Activated CD4-positive, alpha-beta T cell treated with anti-CD3 and anti-CD28 coated beads for 36 hours (primary cell): ENCODE measurements at regions of chr17 and their contacts with region 1.

Region 1: DNA sequence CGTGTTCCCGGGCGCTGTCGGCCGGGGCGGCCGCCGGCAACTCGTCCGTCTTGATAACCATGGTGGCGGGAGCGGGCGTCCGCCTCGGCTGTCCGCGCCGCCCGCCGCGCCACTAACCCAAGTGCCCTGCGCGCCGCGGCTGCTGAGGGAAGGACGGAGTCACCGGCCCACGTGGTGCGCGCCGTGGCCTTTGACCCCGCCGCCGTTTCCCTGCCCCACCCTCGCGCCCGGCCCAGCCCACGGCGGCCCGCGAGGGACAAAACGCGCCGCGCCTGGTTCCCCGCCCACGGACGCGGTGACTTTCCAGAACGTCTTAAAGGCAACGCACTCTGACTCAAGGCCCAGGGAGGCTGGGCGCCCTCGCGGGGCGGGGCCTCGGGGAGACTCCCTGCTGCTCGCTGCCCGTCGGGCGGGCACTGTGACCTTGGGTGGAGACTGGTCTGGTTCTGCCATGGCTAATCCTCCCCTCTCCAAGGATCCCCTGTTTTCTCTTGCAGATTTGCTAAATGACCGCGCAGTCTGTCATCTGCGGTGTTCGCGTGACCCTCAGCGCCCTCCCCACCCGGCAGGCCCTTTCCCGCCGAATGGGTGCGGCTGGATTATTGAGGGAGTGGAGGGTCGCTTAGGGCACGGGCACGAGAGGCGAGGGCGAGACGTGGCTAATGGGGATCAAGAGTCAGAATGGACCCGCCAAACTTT is at the start of gene CLUH:
- DNase-seq: peak; percentile 98
- ATAC-seq: peak; percentile 95
- H3K4me3 Mint-ChIP-seq: peak within 1 kb of the TSS; percentile 86
- H3K27ac Mint-ChIP-seq: peak within 1 kb of the TSS; percentile 84
- H3K4me1 Mint-ChIP-seq: peaks cover 35% of the 10 kb centered on the region
- H3K27me3 Mint-ChIP-seq: no peaks in the 10 kb centered on the region
- total RNA-seq, gene CLUH: 107 to 123 TPM

Region 2: GRCh38 chr17:2222901-2223616 is 488.7 kb before region 1 on chr17:
- CTCF ChIA-PET with region 1: no interaction called
- POLR2A ChIA-PET with region 1: no interaction called
- intact Hi-C with region 1: no loop called
- DNase-seq: peak; percentile 73
- ATAC-seq: peak; percentile 73
- H3K4me3 Mint-ChIP-seq: peak overlapping the region; percentile 25
- H3K27ac Mint-ChIP-seq: peak overlapping the region; percentile 57
- H3K4me1 Mint-ChIP-seq: peaks cover 38% of the 10 kb centered on the region
- H3K27me3 Mint-ChIP-seq: no peaks in the 10 kb centered on the region

Region 3: DNA sequence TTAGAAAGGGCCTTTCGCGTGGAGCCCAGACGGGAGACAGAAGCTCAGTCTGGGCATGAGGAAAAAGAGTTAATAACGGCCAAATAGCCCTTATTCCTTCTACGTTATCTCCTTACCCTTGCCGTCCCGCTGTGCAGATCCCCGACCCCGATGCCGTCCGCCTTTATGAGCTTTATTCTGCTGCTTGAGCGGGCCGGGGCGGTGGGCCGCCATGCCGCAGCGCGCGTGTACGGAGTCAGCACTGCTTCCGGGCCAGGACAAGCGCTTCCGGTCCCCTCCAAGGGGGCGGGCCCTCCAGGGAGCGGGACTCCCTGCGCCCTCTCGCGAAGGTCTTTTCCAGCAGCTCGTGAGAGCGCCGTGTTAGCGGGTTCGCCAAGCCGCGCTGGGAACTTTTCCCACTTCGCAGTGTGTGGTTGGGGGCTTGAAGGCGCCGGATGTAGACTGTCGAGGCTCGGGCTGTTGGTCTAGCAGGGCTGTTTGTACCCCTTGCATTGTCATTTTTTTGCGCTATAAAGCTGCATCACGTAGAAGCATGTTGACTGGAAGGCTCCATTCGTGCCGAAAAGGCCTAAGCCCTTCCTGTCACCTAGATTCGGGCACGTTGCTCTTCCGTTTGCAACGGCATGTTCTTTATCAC is 375.4 kb before region 1 on chr17 and contains the start of gene TSR1:
- CTCF ChIA-PET with region 1: no interaction called
- POLR2A ChIA-PET with region 1: no interaction called
- intact Hi-C with region 1: loop called in 1 of 2 experiments (anchors 1 kb)
- DNase-seq: peak; percentile 94
- ATAC-seq: peak; percentile 93
- H3K4me3 Mint-ChIP-seq: no peak within 1 kb of the TSS
- H3K27ac Mint-ChIP-seq: peak within 1 kb of the TSS; percentile 99
- H3K4me1 Mint-ChIP-seq: peaks cover 14% of the 10 kb centered on the region
- H3K27me3 Mint-ChIP-seq: no peaks in the 10 kb centered on the region
- total RNA-seq, gene TSR1: 59.3 to 77.0 TPM

Region 4: DNA sequence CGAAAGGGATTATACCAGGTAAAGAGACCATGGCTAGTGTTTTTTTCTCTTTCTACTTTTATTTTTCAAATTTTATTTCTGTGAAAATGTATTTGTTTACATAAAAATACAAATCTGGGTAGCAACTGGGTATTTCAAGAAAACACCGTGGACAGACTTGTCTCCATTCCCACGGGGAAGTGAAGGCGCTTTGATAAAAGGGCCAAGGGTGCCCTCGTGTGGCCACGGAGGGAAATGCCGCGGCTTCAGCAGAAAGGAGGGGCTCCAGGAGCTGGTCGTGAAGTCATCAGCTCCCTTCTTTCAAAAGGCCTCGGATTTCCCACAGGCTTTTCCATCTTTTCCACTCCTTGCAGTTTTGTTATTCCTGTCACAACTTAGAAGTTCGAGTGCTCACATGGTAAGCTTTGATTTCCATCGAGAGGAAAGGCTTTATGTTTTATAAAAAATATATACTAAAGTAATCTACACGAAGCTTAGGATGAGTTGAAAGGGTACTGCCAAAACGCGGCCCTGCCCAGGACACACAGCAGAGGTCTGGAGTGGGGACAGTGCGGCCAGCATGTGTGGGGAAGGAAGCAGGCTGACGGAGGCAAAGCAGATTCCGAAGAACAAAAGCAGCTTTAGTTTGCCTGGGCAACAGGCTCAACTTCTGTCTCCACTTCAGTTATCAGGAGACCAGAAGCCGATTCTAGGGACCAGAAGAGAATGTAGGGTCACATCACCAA is 295.6 kb before region 1 on chr17:
- CTCF ChIA-PET with region 1: interaction called, 10 read pairs
- POLR2A ChIA-PET with region 1: no interaction called
- intact Hi-C with region 1: no loop called
- DNase-seq: peak; percentile 90
- ATAC-seq: peak; percentile 82
- H3K4me3 Mint-ChIP-seq: no peak overlapping the region
- H3K27ac Mint-ChIP-seq: no peak overlapping the region
- H3K4me1 Mint-ChIP-seq: peaks cover 4% of the 10 kb centered on the region
- H3K27me3 Mint-ChIP-seq: no peaks in the 10 kb centered on the region

Region 5: GRCh38 chr17:2592971-2593820 is 118.6 kb before region 1 on chr17 and contains the start of gene PAFAH1B1:
- CTCF ChIA-PET with region 1: no interaction called
- POLR2A ChIA-PET with region 1: interaction called, 6 read pairs
- intact Hi-C with region 1: loop called in 1 of 2 experiments (anchors 1 kb)
- DNase-seq: peak; percentile 98
- ATAC-seq: peak; percentile 84
- H3K4me3 Mint-ChIP-seq: peak within 1 kb of the TSS; percentile 79
- H3K27ac Mint-ChIP-seq: peak within 1 kb of the TSS; percentile 88
- H3K4me1 Mint-ChIP-seq: peaks cover 25% of the 10 kb centered on the region
- H3K27me3 Mint-ChIP-seq: no peaks in the 10 kb centered on the region
- total RNA-seq, gene PAFAH1B1: 163 to 167 TPM

Region 6: GRCh38 chr17:2672026-2672425 is 39.7 kb before region 1 on chr17:
- CTCF ChIA-PET with region 1: no interaction called
- POLR2A ChIA-PET with region 1: no interaction called
- intact Hi-C with region 1: no loop called
- DNase-seq: no peak
- ATAC-seq: no peak
- H3K4me3 Mint-ChIP-seq: no peak overlapping the region
- H3K27ac Mint-ChIP-seq: no peak overlapping the region
- H3K4me1 Mint-ChIP-seq: peaks cover 6% of the 10 kb centered on the region
- H3K27me3 Mint-ChIP-seq: no peaks in the 10 kb centered on the region

Region 7: GRCh38 chr17:3558603-3559269 is 847.0 kb after region 1 on chr17:
- CTCF ChIA-PET with region 1: no interaction called
- POLR2A ChIA-PET with region 1: no interaction called
- intact Hi-C with region 1: loop called in 1 of 2 experiments (anchors 5 kb)
- DNase-seq: peak; percentile 85
- ATAC-seq: peak; percentile 81
- H3K4me3 Mint-ChIP-seq: no peak overlapping the region
- H3K27ac Mint-ChIP-seq: peak overlapping the region; percentile 69
- H3K4me1 Mint-ChIP-seq: peaks cover 34% of the 10 kb centered on the region
- H3K27me3 Mint-ChIP-seq: no peaks in the 10 kb centered on the region